ENCODE measurements at regions of chr21 and their contacts with region 1.

Region 1: GRCh38 chr21:38965909-38966504 is 160.3 kb downstream of the ETS2 start:
- DNase-seq: no peak
- H3K4me3 ChIP-seq: no peak overlapping the region
- H3K27ac ChIP-seq: no peak overlapping the region
- H3K4me1 ChIP-seq: no peaks in the 10 kb centered on the region
- H3K27me3 ChIP-seq: no peaks in the 10 kb centered on the region
- CTCF ChIP-seq: no peak

Region 2: GRCh38 chr21:38913120-38913892 is 52.7 kb before region 1 on chr21:
- CTCF ChIA-PET with region 1: no interaction called
- dilution Hi-C with region 1: no loop called
- in situ Hi-C with region 1: no loop called
- intact Hi-C with region 1: no loop called
- DNase-seq: peak; percentile 87
- H3K4me3 ChIP-seq: no peak overlapping the region
- H3K27ac ChIP-seq: peak overlapping the region; percentile 71
- H3K4me1 ChIP-seq: peaks cover 49% of the 10 kb centered on the region
- H3K27me3 ChIP-seq: no peaks in the 10 kb centered on the region
- CTCF ChIP-seq: no peak

Region 3: GRCh38 chr21:38925923-38926322 is 40.1 kb before region 1 on chr21:
- CTCF ChIA-PET with region 1: no interaction called
- dilution Hi-C with region 1: loop called (anchors 5 kb)
- in situ Hi-C with region 1: no loop called
- intact Hi-C with region 1: no loop called
- DNase-seq: peak; percentile 84
- H3K4me3 ChIP-seq: peak overlapping the region; percentile 10 to 28 (median 21)
- H3K27ac ChIP-seq: peak overlapping the region; percentile 11
- H3K4me1 ChIP-seq: peaks cover 11% of the 10 kb centered on the region
- H3K27me3 ChIP-seq: no peaks in the 10 kb centered on the region
- CTCF ChIP-seq: no peak

Region 4: DNA sequence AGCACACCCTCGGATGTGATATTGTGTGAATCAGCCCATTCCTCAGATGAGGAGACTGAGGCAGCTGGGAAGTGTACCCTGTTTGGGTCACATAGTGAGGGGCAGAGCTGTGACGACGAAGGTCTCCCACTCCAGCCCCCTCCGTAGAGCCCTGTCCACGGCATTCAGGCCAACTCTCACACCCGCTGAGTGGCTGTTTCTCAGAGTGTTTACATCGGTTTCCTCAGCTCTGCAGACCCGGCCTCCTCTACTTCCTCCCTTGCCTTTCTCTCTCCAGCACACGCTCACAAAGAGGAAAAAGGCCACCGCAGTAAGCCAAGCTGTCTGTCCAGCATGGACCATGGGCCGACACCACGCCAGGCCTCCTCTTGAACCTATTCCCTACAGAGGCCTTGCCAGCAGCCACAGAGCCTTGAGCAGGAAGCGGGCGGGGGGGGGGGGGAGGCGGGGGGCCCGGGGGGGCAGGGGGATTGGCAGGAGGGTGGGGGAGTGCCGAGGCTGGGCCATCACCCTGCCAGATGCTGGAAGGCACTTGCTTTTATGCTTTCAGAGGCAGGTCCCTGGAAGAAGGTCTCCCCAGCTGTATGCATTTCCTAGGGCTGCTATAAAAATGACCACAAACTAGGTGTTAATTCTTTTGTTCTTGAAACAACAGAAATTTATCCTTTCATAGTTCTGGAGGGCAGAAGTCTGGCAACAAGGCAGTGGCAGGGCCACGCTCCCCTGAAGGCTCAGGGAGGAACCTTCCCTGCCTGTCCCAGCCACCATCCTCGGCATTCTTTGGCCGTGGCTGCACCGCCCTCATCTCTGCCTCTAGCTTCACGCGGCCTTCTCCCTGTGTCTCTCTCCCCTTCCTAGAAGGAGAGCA is 38.9 kb after region 1 on chr21:
- CTCF ChIA-PET with region 1: no interaction called
- dilution Hi-C with region 1: no loop called
- in situ Hi-C with region 1: no loop called
- intact Hi-C with region 1: no loop called
- DNase-seq: no peak
- H3K4me3 ChIP-seq: no peak overlapping the region
- H3K27ac ChIP-seq: no peak overlapping the region
- H3K4me1 ChIP-seq: peaks cover 10% of the 10 kb centered on the region
- H3K27me3 ChIP-seq: no peaks in the 10 kb centered on the region
- CTCF ChIP-seq: no peak

Region 5: DNA sequence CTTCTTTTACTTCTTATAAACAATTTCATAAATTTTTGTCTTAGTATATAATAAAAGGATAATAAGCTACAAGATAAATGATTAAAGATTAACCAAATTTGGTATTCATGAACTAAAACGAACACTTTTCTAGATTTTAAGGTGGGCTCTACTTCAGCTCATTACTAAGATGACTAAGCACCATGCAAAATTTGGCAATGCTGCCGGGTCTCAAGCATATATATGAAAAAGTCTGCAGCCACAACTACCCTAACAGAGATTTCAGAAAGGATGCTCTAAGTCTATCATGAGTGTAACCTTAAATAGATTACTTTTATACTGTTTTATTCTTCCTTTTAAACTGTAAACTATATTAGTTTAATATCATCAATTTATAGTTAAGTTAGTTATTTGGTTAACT is 299.6 kb after region 1 on chr21:
- CTCF ChIA-PET with region 1: no interaction called
- dilution Hi-C with region 1: no loop called
- in situ Hi-C with region 1: no loop called
- intact Hi-C with region 1: no loop called
- DNase-seq: no peak
- H3K4me3 ChIP-seq: no peak overlapping the region
- H3K27ac ChIP-seq: no peak overlapping the region
- H3K4me1 ChIP-seq: peaks cover 6% of the 10 kb centered on the region
- H3K27me3 ChIP-seq: no peaks in the 10 kb centered on the region
- CTCF ChIP-seq: no peak

Measured in mammary epithelial cell (primary cell).